Heart right ventricle (tissue), 16 donors: ENCODE measurements at regions of chr15 and their contacts with region 1.

Region 1: GRCh38 chr15:39669661-39670060 is 88.8 kb downstream of the THBS1 start:
- DNase-seq: no peak
- ATAC-seq: no peak
- H3K4me3 ChIP-seq: no peak overlapping the region
- H3K27ac ChIP-seq: no peak overlapping the region
- H3K4me1 ChIP-seq: peaks cover 0 to 15% (median 0%) of the 10 kb centered on the region in 9 donors
- H3K27me3 ChIP-seq: no peaks in the 10 kb centered on the region
- CTCF ChIP-seq: no peak

Region 2: DNA sequence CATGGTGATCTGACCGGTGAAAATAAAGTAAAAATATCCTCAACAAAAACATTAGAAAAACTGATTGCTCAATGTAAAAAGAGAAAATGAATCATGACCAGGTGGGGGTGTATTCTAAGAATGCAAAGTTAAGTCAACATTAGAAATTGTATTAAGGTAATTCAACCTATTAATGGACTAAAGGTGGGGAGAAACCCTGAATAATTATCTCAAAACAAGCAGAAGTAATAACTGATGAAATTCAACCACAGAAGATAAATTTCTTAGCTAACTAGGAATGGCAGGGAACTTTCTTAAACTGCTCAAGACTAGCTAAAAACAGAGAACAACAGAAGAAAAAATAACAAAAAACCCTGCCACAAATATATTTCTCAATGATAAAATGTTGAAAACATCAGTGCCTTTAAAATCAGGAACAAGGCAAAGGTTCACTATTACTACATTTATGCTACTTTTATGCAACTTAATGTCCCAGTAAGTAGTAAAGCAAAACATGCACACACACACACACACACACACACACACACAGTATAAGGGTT is 293.2 kb before region 1 on chr15:
- intact Hi-C with region 1: no loop called
- DNase-seq: no peak
- ATAC-seq: peak in 1 of 8 donors; percentile 20
- H3K4me3 ChIP-seq: no peak overlapping the region
- H3K27ac ChIP-seq: peak overlapping the region in 1 of 10 donors; percentile 69
- H3K4me1 ChIP-seq: peaks cover 0 to 26% (median 0%) of the 10 kb centered on the region in 9 donors
- H3K27me3 ChIP-seq: no peaks in the 10 kb centered on the region
- CTCF ChIP-seq: no peak

Region 3: DNA sequence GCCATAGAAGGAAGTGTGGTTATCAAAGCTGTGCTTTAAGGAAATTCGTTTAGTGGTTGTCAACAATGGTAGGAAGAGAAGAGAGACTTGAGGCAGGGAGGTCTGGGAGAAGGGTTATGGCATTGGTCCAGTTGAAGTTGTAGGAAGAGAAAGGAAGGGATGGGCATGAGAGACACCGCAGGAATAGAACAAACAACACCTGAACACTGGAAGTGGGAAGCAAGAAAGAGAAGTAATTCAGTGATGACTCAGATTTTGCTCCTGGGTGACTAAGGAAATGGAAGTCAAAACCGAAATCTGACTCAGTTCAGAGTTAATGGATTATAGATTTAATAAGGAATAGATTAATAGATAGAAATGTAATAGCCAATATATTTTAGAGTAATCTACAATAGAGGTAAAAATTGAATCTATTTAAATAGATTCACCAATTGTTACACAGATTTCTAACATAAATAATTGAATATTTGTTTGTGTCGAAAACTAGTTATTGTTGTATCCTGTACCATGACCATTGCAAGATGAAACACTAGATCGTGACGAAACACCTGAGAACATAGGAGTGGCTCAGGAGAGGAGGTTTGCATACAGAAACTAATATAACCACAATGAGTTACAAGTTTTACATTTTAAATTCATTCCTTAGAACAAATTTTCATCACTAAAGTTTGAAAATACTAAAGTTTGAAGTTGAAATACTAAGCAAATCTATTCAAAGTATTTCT is 52.8 kb before region 1 on chr15:
- intact Hi-C with region 1: loop called in 1 of 10 experiments (anchors 10 kb)
- DNase-seq: no peak
- ATAC-seq: no peak
- H3K4me3 ChIP-seq: no peak overlapping the region
- H3K27ac ChIP-seq: no peak overlapping the region
- H3K4me1 ChIP-seq: peaks cover 0 to 14% (median 0%) of the 10 kb centered on the region in 9 donors
- H3K27me3 ChIP-seq: no peaks in the 10 kb centered on the region
- CTCF ChIP-seq: no peak